ENCODE measurements at regions of chr9 and their contacts with region 1.

Region 1: DNA sequence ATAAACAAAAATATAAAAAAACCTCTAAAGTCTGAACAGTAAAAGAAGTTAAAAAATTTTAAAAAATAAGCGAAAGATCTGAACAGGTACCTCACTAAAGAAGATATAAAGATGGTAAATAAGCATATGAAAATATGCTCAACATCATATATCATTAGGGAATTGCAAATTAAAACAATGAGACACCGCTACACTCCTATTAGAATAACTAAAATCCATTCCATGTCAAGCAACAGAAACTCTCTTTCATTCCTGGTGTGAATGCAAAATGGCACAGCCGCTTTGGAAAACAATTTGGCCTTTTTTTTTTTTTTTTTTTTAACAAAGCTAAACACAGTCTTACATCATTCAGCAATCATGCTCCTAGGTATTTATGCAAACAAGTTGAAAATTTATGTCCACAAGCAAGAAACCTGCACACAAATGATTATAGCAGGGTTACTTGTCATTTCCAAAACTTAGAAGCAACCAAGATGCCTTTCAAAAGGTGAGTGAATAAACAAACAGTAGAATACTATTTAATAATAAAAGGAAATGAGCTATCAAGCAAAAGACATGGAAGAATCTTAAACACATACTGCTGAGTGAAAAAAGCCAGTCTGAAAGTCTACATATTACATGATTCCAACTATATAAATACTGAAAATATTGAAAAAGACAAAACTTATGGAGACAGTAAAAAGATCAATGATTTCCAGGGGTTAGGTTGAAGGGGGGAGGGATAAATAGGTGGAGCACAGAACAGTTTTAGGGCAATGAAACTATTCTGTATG is 22.1 kb downstream of the ANXA1 start:
- DNase-seq: no peak
- H3K4me3 ChIP-seq: no peak overlapping the region
- H3K4me3 Mint-ChIP-seq: no peak overlapping the region
- H3K27ac ChIP-seq: no peak overlapping the region
- H3K27ac Mint-ChIP-seq: peak overlapping the region in 1 of 7 donors; percentile 45
- H3K4me1 ChIP-seq: no peaks in the 10 kb centered on the region
- H3K4me1 Mint-ChIP-seq: no peaks in the 10 kb centered on the region
- H3K27me3 ChIP-seq: no peaks in the 10 kb centered on the region
- H3K27me3 Mint-ChIP-seq: no peaks in the 10 kb centered on the region
- CTCF ChIP-seq: no peak

Region 2: GRCh38 chr9:73132034-73132776 is 41.5 kb before region 1 on chr9:
- intact Hi-C with region 1: loop called in 1 of 2 experiments (anchors 5 kb)
- DNase-seq: peak; percentile 80 to 90 (median 89)
- H3K4me3 ChIP-seq: peak overlapping the region; percentile 81 to 99 (median 89)
- H3K4me3 Mint-ChIP-seq: peak overlapping the region; percentile 89 to 94
- H3K27ac ChIP-seq: peak overlapping the region; percentile 90 to 94
- H3K27ac Mint-ChIP-seq: peak overlapping the region; percentile 95 to 98 (median 95)
- H3K4me1 ChIP-seq: peaks cover 23 to 32% of the 10 kb centered on the region in 2 donors
- H3K4me1 Mint-ChIP-seq: peaks cover 24% of the 10 kb centered on the region
- H3K27me3 ChIP-seq: no peaks in the 10 kb centered on the region
- H3K27me3 Mint-ChIP-seq: peaks cover 0 to 3% (median 0%) of the 10 kb centered on the region in 3 donors
- CTCF ChIP-seq: no peak

Region 3: GRCh38 chr9:73157811-73158210 is 15.9 kb before region 1 on chr9:
- intact Hi-C with region 1: loop called in 1 of 2 experiments (anchors 2 kb)
- DNase-seq: no peak
- H3K4me3 ChIP-seq: peak overlapping the region in 1 of 3 experiments; percentile 57
- H3K4me3 Mint-ChIP-seq: no peak overlapping the region
- H3K27ac ChIP-seq: peak overlapping the region in 1 of 2 donors; percentile 71
- H3K27ac Mint-ChIP-seq: peak overlapping the region; percentile 25 to 72 (median 43)
- H3K4me1 ChIP-seq: peaks cover 37 to 46% of the 10 kb centered on the region in 2 donors
- H3K4me1 Mint-ChIP-seq: peaks cover 38% of the 10 kb centered on the region
- H3K27me3 ChIP-seq: no peaks in the 10 kb centered on the region
- H3K27me3 Mint-ChIP-seq: no peaks in the 10 kb centered on the region
- CTCF ChIP-seq: no peak

Measured in CD14-positive monocyte (primary cell).